WTC11 (cell line): ENCODE measurements at regions of chr5 and their contacts with region 1.

Region 1: GRCh38 chr5:74640450-74640953 is at the start of gene ENC1:
- DNase-seq: peak; percentile 89
- ATAC-seq: peak; percentile 82
- H3K4me3 Mint-ChIP-seq: peak within 1 kb of the TSS; percentile 87
- H3K27ac Mint-ChIP-seq: peak within 1 kb of the TSS; percentile 64; the same call in 1 of the 2 replicates
- H3K4me1 Mint-ChIP-seq: peaks cover 38% of the 10 kb centered on the region
- H3K27me3 Mint-ChIP-seq: peaks cover 34% of the 10 kb centered on the region
- CTCF ChIP-seq: no peak
- total RNA-seq, gene ENC1: 10.7 to 18.3 TPM (median 11.4 TPM) in 3 replicates

Region 2: DNA sequence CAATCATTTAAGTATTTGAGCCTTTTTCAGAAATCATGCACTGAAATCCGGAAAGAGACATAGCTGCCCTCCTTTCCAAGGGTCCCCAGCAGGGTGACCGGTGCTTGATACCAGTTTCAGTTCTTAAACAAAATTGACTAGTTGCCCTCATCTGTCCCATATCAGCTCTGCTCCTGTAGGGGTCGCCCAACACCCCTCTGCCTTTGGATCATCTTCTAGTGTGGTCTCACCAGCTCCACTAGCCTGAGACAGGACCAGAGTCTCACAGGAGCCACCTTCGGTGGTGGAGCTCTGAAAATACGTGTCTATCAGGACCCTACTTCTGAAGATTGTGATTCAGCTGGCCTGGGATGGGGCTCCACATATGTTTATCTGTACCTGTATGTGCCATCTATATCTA is 428.2 kb before region 1 on chr5:
- CTCF ChIA-PET with region 1: interaction called, 21 read pairs
- POLR2A ChIA-PET with region 1: no interaction called
- DNase-seq: peak; percentile 67
- ATAC-seq: peak; percentile 99
- H3K4me3 Mint-ChIP-seq: no peak overlapping the region
- H3K27ac Mint-ChIP-seq: no peak overlapping the region
- H3K4me1 Mint-ChIP-seq: peaks cover 8% of the 10 kb centered on the region
- H3K27me3 Mint-ChIP-seq: no peaks in the 10 kb centered on the region
- CTCF ChIP-seq: peak; percentile 20; the same call in 1 of the 2 replicates

Region 3: DNA sequence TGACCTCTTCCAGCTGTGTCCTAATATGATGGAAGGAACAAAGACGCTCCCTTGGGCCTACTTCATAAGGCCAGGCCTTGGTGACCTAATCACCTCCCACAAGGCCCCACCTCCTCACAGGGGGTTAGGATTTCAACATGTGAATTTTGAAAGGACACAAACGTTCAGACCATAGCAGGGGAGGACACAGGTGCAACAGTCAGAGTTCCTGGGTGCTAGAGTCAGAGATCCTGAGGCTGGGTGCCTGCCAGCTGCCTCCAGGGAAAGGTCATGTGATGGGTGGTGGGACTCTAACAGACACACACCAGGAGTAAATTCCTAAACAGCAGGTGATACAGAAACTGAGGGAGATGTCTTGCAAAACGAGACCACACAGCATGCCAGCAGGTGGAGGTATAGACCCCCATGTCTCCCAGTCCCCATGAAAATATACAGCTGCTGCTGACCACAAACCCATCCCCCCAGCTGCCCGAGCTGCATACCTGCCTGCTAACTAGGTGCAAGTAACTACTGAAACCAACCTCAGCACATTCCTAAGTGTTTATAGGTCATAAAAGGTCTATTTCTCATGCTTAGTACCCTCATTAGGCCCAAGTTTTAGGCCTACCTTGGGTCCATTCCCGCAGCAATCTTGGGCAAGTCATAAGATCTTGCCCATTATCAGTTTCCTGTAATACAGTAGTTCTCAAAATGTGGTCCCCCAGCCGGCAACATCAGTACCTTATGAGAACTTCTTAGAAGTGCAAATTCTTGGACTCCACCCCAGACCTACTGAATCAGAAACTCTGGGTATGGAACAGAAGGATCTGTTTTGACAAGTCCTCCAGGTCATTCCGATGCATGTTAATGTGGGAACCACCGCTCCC is 245.4 kb before region 1 on chr5:
- CTCF ChIA-PET with region 1: interaction called, 22 read pairs
- POLR2A ChIA-PET with region 1: interaction called, 5 read pairs
- DNase-seq: peak; percentile 83
- ATAC-seq: peak; percentile 89
- H3K4me3 Mint-ChIP-seq: no peak overlapping the region; the same call in 1 of the 2 replicates
- H3K27ac Mint-ChIP-seq: peak overlapping the region; percentile 32; the same call in 1 of the 2 replicates
- H3K4me1 Mint-ChIP-seq: peaks cover 32% of the 10 kb centered on the region
- H3K27me3 Mint-ChIP-seq: peaks cover 53% of the 10 kb centered on the region
- CTCF ChIP-seq: no peak

Region 4: DNA sequence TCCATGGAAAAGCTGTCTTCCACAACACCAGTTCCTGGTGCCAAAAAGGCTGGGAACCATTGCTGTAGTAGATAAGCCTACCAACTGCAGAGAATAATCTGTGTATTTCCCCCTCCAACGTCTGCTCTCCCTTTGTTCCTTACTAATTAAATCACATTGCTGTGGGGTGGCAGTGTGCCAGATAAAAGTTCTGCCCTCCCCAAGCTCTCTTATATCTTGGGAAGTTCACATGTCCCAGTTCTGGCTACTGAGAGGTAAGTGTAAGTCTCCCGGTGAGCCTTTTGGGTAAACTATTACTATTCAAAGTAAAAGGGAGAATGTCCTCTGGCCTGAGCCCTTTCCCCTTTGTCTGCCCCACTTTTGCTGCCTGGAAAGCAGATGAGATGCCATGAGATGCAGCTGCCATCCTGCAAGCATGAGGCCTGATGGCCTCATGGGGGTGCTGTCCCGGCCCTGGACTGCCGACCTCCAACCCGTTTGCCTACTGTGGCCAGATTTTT is 14.7 kb before region 1 on chr5:
- CTCF ChIA-PET with region 1: interaction called, 15 read pairs
- POLR2A ChIA-PET with region 1: interaction called, 8 read pairs
- DNase-seq: no peak
- ATAC-seq: peak; percentile 71
- H3K4me3 Mint-ChIP-seq: no peak overlapping the region
- H3K27ac Mint-ChIP-seq: no peak overlapping the region
- H3K4me1 Mint-ChIP-seq: peaks cover 65% of the 10 kb centered on the region
- H3K27me3 Mint-ChIP-seq: no peaks in the 10 kb centered on the region
- CTCF ChIP-seq: 0 out of 2 replicates have a peak, but pooled peaks have one; percentile 16

Region 5: GRCh38 chr5:74766849-74767578 is 126.5 kb after region 1 on chr5 and contains the starts of genes GFM2 and NSA2:
- CTCF ChIA-PET with region 1: no interaction called
- POLR2A ChIA-PET with region 1: no interaction called
- DNase-seq: peak; percentile 93
- ATAC-seq: peak; percentile 94
- H3K4me3 Mint-ChIP-seq: peak within 1 kb of the TSS; percentile 100
- H3K27ac Mint-ChIP-seq: peak within 1 kb of the TSS; percentile 88
- H3K4me1 Mint-ChIP-seq: peaks cover 16% of the 10 kb centered on the region
- H3K27me3 Mint-ChIP-seq: no peaks in the 10 kb centered on the region
- CTCF ChIP-seq: no peak
- total RNA-seq, gene GFM2: 27.8 to 31.6 TPM (median 29.2 TPM) in 3 replicates
- total RNA-seq, gene NSA2: 65.5 to 75.6 TPM (median 68.8 TPM) in 3 replicates